Dendritic cell treated with granulocyte-macrophage colony-stimulating factor and Interleukin-4, amounts not matched to agents 40 ng/mL and 50 ng/mL, for 4 days (primary cell): ENCODE measurements at regions of chrX and their contacts with region 1.

Region 1: GRCh38 chrX:54182864-54183608 is at the start of gene FAM120C:
- H3K4me3 Mint-ChIP-seq: peak within 1 kb of the TSS; percentile 74
- H3K27ac Mint-ChIP-seq: peak within 1 kb of the TSS; percentile 83
- H3K4me1 Mint-ChIP-seq: peaks cover 30% of the 10 kb centered on the region
- H3K27me3 Mint-ChIP-seq: no peaks in the 10 kb centered on the region

Region 2: GRCh38 chrX:54044126-54044876 is 138.7 kb before region 1 on chrX and contains the start of gene PHF8:
- intact Hi-C with region 1: loop called (anchors 2 kb)
- H3K4me3 Mint-ChIP-seq: peak within 1 kb of the TSS; percentile 90
- H3K27ac Mint-ChIP-seq: peak within 1 kb of the TSS; percentile 95
- H3K4me1 Mint-ChIP-seq: peaks cover 13% of the 10 kb centered on the region
- H3K27me3 Mint-ChIP-seq: no peaks in the 10 kb centered on the region

Region 3: DNA sequence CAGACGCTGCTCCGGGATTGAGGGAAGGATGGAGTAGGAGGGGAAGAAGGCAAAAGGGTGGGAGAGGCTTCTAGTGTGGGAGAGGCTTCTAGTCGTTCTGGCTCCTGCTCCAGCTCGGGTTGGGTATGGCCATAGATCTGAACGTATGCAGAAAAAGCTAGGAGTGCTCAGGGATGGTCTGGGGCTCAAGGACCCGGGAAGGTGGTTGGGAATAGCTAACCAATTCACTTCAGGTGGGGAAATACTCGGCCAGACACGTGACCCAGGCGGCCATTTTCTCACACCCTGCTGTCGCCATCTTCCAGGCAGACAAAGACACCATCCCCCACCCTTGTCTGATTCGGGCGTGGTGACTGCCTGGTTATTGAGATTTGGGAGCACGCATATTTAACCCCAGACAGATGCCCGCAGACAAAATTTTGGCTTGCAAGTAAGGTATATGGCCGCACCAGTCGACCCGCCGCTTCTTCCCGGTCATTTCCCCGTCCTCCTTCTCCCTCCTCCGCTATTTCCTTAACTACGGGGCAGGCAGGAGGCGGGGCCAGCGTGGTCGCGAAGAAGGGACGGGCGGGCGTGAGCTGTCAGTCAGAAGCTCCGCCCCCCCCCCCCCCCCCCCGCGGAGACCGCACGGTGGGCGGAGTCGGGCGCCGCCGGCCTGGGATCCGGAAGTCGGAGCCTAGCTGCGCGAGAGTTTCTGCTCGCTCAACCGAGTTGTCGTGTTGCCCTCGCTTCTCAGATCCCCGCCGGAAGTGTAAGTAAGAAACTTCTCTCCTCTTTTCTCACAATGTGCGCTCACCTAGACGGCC is 346.7 kb after region 1 on chrX and contains the start of gene GNL3L:
- intact Hi-C with region 1: loop called (anchors 2 kb)
- H3K4me3 Mint-ChIP-seq: peak within 1 kb of the TSS; percentile 79
- H3K27ac Mint-ChIP-seq: peak within 1 kb of the TSS; percentile 88
- H3K4me1 Mint-ChIP-seq: peaks cover 26% of the 10 kb centered on the region
- H3K27me3 Mint-ChIP-seq: no peaks in the 10 kb centered on the region

Region 4: DNA sequence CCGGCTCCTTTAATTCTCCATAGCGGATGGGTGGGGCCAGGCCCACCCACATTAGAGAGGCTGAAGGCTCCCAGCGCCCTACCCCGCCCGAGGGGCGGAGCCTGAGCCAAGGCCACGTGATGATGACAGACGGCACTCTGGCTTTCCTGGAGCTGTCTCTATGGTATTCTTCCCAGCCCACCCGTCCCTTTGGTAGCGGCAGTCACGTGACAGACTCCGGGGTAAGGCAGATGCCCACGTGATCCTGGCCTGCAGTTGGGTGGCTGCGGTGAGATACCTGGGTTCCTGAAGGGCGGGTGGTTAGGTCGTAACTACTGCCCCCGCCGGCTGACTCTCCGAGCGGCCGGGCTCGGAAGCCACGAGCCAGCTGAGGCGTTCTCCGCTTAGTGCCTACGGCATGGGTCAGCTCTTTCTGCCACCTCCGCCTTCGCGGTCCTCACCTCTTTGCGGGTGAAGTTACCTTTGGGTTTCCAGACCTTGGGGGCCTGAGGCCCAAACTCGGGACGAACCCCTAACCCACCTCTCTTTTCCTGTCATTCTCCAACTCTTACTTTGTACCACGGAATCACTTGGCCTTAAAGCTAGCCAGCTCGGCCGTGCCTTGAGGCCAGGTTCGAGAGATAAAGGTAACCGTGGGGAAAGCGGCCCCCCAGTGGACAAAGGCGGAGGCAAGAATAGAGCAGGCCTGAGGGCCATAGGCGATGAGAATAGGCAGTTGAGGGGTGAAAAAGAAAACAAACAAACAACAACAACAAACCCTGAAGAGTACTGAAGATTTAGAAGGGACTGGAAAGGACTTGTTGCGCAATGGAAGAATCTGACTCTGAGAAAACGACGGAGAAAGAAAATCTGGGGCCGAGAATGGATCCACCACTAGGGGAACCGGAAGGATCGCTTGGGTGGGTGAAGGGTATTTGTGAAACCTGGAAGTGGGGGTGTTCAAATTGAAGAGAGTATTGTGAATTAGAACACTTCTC is 1534.8 kb after region 1 on chrX and contains the start of gene RRAGB:
- intact Hi-C with region 1: loop called (anchors 10 kb)
- H3K4me3 Mint-ChIP-seq: peak within 1 kb of the TSS; percentile 88
- H3K27ac Mint-ChIP-seq: peak within 1 kb of the TSS; percentile 87
- H3K4me1 Mint-ChIP-seq: peaks cover 34% of the 10 kb centered on the region
- H3K27me3 Mint-ChIP-seq: no peaks in the 10 kb centered on the region